ENCODE measurements at regions of chr12 and their contacts with region 1.

Region 1: GRCh38 chr12:7189398-7190267 is at the start of gene PEX5:
- H3K4me3 ChIP-seq: peak within 1 kb of the TSS; percentile 76
- H3K27ac ChIP-seq: peak within 1 kb of the TSS; percentile 67; the same call in 1 of the 2 replicates
- H3K4me1 ChIP-seq: peaks cover 19% of the 10 kb centered on the region
- CTCF ChIP-seq: no peak

Region 2: GRCh38 chr12:7162691-7163114 is 26.9 kb before region 1 on chr12:
- CTCF ChIA-PET with region 1: interaction called, 15 read pairs
- POLR2A ChIA-PET with region 1: interaction called, 3 read pairs
- H3K4me3 ChIP-seq: no peak overlapping the region
- H3K27ac ChIP-seq: no peak overlapping the region
- H3K4me1 ChIP-seq: no peaks in the 10 kb centered on the region
- CTCF ChIP-seq: peak; percentile 46; the same call in 1 of the 2 replicates

Measured in HEK293 (cell line).